HepG2 (cell line): ENCODE measurements at regions of chr7 and their contacts with region 1.

Region 1: DNA sequence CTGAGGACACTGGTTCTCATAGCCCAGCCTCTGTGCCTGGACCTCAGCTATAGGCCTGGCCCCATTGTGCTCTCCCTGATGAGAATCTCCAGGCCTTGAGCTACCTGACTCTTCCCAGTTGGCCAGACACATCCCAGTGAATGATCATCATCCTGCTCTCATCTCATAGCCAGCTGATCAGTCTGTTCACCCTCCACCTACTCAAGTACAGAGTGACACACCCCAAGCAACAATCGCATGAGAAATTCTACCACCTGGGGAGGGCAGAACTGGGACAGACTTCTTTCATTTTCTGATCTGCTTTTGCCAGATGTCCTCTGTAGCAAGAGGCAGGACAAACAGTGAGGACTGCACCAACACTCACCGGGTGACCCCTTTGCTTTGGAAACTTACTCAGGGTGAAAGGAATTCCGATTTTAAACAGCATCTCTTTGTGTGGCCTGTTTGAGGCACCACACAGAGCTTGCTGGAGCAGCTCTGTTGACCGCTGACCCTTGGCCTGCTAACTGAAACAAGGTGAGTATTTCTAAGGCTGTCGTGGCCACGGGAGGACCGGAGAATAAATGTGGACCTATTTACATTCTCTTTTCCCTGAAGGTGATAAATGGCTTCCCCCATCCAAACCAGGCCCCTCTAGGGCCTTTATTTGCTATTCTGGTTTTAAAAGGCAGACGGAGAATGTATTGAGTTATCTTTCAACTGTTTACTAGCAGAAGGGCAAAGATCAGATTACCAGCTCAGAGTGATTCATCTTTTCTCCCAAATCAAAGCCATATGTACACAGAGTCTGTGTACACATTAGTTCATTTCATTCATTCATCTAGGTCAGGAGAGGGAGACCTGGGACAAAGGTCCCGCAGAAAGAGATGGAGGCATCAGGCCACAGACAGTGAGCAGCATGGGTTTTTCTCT is 181.4 kb upstream of the TNS3 start:
- DNase-seq: peak; percentile 100
- ATAC-seq: peak; percentile 93
- H3K4me3 ChIP-seq: peak overlapping the region; percentile 7 to 57 (median 40); a peak in 4 of 6 replicates
- H3K27ac ChIP-seq: peak overlapping the region; percentile 98
- H3K4me1 ChIP-seq: peaks cover 68% of the 10 kb centered on the region
- H3K27me3 ChIP-seq: no peaks in the 10 kb centered on the region
- CTCF ChIP-seq: peak; percentile 21; the same call in 1 of the 2 replicates
- EP300 ChIP-seq: peak; percentile 96 to 98
- POLR2A ChIP-seq: peak in 1 of 2 experiments; percentile 59; a peak in 2 of 4 replicates
- RAD21 ChIP-seq: 0 out of 2 replicates have a peak, but pooled peaks have one; percentile 48

Region 2: GRCh38 chr7:47458057-47458456 is 305.3 kb before region 1 on chr7:
- CTCF ChIA-PET with region 1: no interaction called
- POLR2A ChIA-PET with region 1: no interaction called
- in situ Hi-C with region 1: no loop called
- intact Hi-C with region 1: no loop called
- DNase-seq: peak; percentile 37
- ATAC-seq: peak; percentile 54
- H3K4me3 ChIP-seq: no peak overlapping the region
- H3K27ac ChIP-seq: no peak overlapping the region
- H3K4me1 ChIP-seq: peaks cover 55% of the 10 kb centered on the region
- H3K27me3 ChIP-seq: no peaks in the 10 kb centered on the region
- CTCF ChIP-seq: no peak
- EP300 ChIP-seq: no peak
- POLR2A ChIP-seq: no peak
- RAD21 ChIP-seq: no peak

Region 3: GRCh38 chr7:47474937-47475878 is 288.1 kb before region 1 on chr7:
- CTCF ChIA-PET with region 1: no interaction called
- POLR2A ChIA-PET with region 1: interaction called, 12 read pairs
- in situ Hi-C with region 1: no loop called
- intact Hi-C with region 1: no loop called
- DNase-seq: peak; percentile 98
- ATAC-seq: peak; percentile 85
- H3K4me3 ChIP-seq: peak overlapping the region in 1 of 3 experiments; percentile 44; a peak in 2 of 6 replicates
- H3K27ac ChIP-seq: peak overlapping the region; percentile 82
- H3K4me1 ChIP-seq: peaks cover 97% of the 10 kb centered on the region
- H3K27me3 ChIP-seq: no peaks in the 10 kb centered on the region
- CTCF ChIP-seq: peak; percentile 55
- EP300 ChIP-seq: peak; percentile 67 to 87
- POLR2A ChIP-seq: peak in 1 of 2 experiments; percentile 88; a peak in 2 of 4 replicates
- RAD21 ChIP-seq: peak; percentile 75

Region 4: DNA sequence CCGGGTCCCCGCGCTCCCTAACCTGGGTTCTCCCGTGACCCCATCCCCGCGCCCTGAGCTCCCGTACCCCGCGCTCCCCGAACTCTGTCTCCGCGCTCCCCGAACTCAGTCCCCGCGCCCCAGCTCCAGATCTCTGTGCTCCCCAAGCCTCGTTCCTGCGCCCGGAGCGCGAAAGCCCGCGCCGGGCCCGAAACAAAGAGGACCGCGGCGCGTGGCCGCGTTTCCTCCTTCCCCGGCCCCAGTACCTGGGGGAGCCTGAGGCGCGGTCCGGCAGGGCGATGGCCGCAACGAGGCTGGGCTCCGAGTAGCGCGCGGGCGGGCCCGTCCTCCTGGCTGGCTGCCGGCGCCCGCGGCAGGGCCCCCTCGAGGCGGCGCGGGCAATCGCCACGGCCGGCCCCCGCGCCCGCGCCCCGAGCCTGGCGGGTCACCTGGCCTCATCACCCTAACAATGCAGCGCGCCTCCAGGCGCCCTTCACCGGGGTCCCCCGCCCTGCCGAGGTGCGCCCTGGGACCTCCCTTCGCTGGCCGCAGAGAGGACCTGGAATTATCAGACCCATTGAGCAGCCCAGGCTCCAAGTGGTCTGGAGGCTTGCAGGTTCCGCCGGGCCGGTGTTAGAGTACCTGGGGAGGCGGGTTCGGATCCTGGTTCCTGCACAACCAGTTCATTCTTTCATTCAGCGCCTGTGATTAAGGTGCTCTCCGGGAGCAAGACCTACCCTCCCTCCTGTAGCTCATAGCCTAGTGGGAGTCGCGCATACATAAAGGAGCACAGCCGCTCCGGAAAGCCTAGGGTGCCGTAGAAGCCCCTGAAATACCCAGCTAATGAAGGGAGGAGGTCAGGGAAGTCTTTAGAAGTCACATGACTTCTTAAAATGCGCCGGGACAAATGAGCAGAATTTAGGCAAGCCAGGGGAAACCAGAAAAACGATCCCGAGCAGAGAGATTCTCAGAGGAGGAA is 181.2 kb before region 1 on chr7 and contains the start of gene TNS3:
- CTCF ChIA-PET with region 1: no interaction called
- POLR2A ChIA-PET with region 1: interaction called, 8 read pairs
- in situ Hi-C with region 1: no loop called
- intact Hi-C with region 1: loop called (anchors 1 kb)
- DNase-seq: no peak
- ATAC-seq: peak; percentile 83
- H3K4me3 ChIP-seq: peak within 1 kb of the TSS; percentile 86 to 91 (median 89)
- H3K27ac ChIP-seq: peak within 1 kb of the TSS; percentile 82
- H3K4me1 ChIP-seq: peaks cover 56% of the 10 kb centered on the region
- H3K27me3 ChIP-seq: no peaks in the 10 kb centered on the region; a peak in 1 of 5 replicates
- CTCF ChIP-seq: peak; percentile 26; the same call in 1 of the 2 replicates
- EP300 ChIP-seq: no peak
- POLR2A ChIP-seq: peak; percentile 25 to 39; a peak in 2 of 4 replicates
- RAD21 ChIP-seq: peak; percentile 89
- total RNA-seq, gene TNS3: 51.3 and 55.7 TPM in 2 replicates

Region 5: DNA sequence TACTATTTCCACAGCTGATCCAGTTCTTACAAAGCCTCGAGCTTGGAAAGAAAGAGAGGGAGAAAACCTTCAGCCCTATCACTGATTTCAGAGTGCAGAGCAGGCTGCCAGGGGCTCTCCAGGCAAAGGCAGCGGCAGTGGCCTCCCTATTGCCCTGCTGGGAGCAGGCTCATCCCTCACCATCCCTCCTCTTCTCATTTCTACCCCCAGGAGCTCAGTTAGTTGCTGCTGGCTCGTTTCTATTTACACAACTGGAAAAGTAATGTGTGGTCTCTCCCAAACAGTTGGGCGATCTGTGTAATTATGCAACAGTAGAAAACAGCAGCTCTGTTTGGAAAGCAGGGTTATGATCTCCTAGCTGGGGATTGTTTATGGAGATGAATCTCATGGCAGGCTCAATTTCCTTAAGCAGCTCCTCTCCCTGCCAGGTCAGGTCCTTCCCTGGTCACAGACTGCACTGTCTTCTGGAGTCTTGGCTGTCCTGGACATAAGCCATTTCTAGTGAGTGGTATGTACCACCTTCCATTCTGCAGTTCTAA is 152.7 kb before region 1 on chr7:
- CTCF ChIA-PET with region 1: no interaction called
- POLR2A ChIA-PET with region 1: interaction called, 21 read pairs
- in situ Hi-C with region 1: no loop called
- intact Hi-C with region 1: loop called (anchors 1 kb)
- DNase-seq: peak; percentile 85
- ATAC-seq: peak; percentile 80
- H3K4me3 ChIP-seq: peak overlapping the region; percentile 34 to 59 (median 38)
- H3K27ac ChIP-seq: peak overlapping the region; percentile 71
- H3K4me1 ChIP-seq: peaks cover 61% of the 10 kb centered on the region
- H3K27me3 ChIP-seq: no peaks in the 10 kb centered on the region
- CTCF ChIP-seq: no peak
- EP300 ChIP-seq: peak in 1 of 2 experiments; percentile 60; a peak in 2 of 4 replicates
- POLR2A ChIP-seq: 0 out of 4 replicates have a peak, but pooled peaks of 1 of the 2 experiments have one; percentile 23
- RAD21 ChIP-seq: no peak

Region 6: GRCh38 chr7:47683485-47683898 is 79.8 kb before region 1 on chr7:
- CTCF ChIA-PET with region 1: no interaction called
- POLR2A ChIA-PET with region 1: no interaction called
- in situ Hi-C with region 1: no loop called
- intact Hi-C with region 1: loop called (anchors 1 kb)
- DNase-seq: peak; percentile 80
- ATAC-seq: peak; percentile 80
- H3K4me3 ChIP-seq: peak overlapping the region in 1 of 3 experiments; percentile 39; a peak in 2 of 6 replicates
- H3K27ac ChIP-seq: no peak overlapping the region
- H3K4me1 ChIP-seq: peaks cover 40% of the 10 kb centered on the region
- H3K27me3 ChIP-seq: no peaks in the 10 kb centered on the region
- CTCF ChIP-seq: no peak
- EP300 ChIP-seq: peak in 1 of 2 experiments; percentile 50; a peak in 1 of 4 replicates
- POLR2A ChIP-seq: no peak
- RAD21 ChIP-seq: no peak

Region 7: DNA sequence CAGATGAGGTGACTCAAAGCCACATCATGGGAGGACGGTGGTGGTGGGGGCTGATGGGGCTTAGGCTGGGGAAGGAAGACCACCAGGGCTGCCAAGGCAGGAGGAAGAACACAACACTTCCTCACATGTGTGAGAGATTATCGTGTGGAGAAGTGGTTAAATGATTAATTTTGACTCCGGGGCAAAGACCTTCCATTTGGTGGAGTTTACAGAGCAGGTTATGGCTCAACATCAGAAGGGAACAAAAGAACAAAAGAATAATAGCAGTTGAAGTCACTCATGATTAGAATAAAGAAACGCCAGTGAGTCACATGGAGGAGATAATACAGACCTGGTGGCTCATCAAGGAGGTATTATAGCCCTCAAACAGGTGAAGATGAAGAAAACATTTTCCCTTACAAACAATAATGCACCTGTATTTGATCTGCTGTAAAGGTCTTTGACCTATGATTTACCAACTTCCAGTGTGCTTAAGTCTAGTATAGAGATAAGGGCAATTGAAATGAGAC is 14.9 kb after region 1 on chr7:
- CTCF ChIA-PET with region 1: no interaction called
- POLR2A ChIA-PET with region 1: interaction called, 167 read pairs
- in situ Hi-C with region 1: no loop called
- intact Hi-C with region 1: loop called (anchors 2 kb)
- DNase-seq: peak; percentile 87
- ATAC-seq: peak; percentile 86
- H3K4me3 ChIP-seq: no peak overlapping the region
- H3K27ac ChIP-seq: peak overlapping the region; percentile 64
- H3K4me1 ChIP-seq: peaks cover 92% of the 10 kb centered on the region
- H3K27me3 ChIP-seq: no peaks in the 10 kb centered on the region
- CTCF ChIP-seq: no peak
- EP300 ChIP-seq: 0 out of 4 replicates have a peak, but pooled peaks of 1 of the 2 experiments have one; percentile 48
- POLR2A ChIP-seq: no peak
- RAD21 ChIP-seq: no peak

Region 8: DNA sequence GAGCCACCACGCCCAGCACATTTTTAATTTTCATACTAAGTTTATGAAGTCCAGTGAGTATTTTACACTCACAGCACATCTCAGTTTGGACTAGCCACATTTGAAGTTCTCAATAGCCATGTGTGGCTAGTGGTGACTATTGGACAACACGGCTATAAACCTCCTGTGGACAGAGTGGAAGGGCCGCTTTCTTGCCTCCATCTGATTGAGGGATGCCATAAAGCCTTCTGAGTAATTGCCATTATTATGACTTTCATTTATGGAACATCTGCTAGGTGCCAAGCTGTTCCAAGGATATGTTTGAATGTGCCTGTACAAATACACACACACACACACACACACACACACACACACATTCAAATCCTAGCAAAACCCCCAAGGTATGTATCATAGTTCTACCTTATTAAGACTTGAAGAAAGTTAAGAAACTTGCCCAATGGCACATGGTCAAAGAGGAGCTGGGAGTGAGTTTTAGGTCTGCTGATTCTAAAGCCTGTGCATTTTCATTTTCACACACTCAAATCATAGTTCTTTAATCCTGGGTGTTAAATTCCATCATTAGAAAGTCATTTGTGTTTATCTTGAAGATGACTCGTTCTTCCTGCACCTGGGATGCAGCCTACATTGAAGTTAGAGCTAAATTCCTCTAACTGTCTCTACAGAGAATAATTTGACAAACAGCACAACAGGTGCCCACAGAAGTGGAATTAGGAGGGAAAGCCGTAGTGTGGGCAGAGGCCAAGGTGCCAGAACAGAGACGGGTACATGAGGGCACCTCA is 41.6 kb after region 1 on chr7:
- CTCF ChIA-PET with region 1: no interaction called
- POLR2A ChIA-PET with region 1: interaction called, 10 read pairs
- in situ Hi-C with region 1: no loop called
- intact Hi-C with region 1: no loop called
- DNase-seq: no peak
- ATAC-seq: no peak
- H3K4me3 ChIP-seq: no peak overlapping the region
- H3K27ac ChIP-seq: no peak overlapping the region
- H3K4me1 ChIP-seq: peaks cover 62% of the 10 kb centered on the region
- H3K27me3 ChIP-seq: no peaks in the 10 kb centered on the region
- CTCF ChIP-seq: no peak
- EP300 ChIP-seq: no peak
- POLR2A ChIP-seq: no peak
- RAD21 ChIP-seq: no peak

Region 9: GRCh38 chr7:48192996-48193395 is 429.7 kb after region 1 on chr7:
- CTCF ChIA-PET with region 1: no interaction called
- POLR2A ChIA-PET with region 1: no interaction called
- in situ Hi-C with region 1: no loop called
- intact Hi-C with region 1: no loop called
- DNase-seq: no peak
- ATAC-seq: no peak
- H3K4me3 ChIP-seq: no peak overlapping the region
- H3K27ac ChIP-seq: no peak overlapping the region
- H3K4me1 ChIP-seq: no peaks in the 10 kb centered on the region
- H3K27me3 ChIP-seq: no peaks in the 10 kb centered on the region
- CTCF ChIP-seq: no peak
- EP300 ChIP-seq: no peak
- POLR2A ChIP-seq: no peak
- RAD21 ChIP-seq: no peak